ENCODE measurements at regions of chr12 and their contacts with region 1.

Region 1: GRCh38 chr12:109880016-109880931 is at the start of gene GLTP:
- DNase-seq: peak; percentile 76 to 91 (median 84)
- H3K4me3 ChIP-seq: peak within 1 kb of the TSS; percentile 68
- H3K27ac ChIP-seq: peak within 1 kb of the TSS in 1 of 2 donors; percentile 63
- H3K4me1 ChIP-seq: peaks cover 4% of the 10 kb centered on the region
- H3K27me3 ChIP-seq: no peaks in the 10 kb centered on the region
- CTCF ChIP-seq: peak in 2 of 3 donors; percentile 91 to 94
- EP300 ChIP-seq: no peak
- POLR2A ChIP-seq: peak; percentile 60
- total RNA-seq, gene GLTP: 15.5 to 36.7 (median 26.3) TPM

Region 2: DNA sequence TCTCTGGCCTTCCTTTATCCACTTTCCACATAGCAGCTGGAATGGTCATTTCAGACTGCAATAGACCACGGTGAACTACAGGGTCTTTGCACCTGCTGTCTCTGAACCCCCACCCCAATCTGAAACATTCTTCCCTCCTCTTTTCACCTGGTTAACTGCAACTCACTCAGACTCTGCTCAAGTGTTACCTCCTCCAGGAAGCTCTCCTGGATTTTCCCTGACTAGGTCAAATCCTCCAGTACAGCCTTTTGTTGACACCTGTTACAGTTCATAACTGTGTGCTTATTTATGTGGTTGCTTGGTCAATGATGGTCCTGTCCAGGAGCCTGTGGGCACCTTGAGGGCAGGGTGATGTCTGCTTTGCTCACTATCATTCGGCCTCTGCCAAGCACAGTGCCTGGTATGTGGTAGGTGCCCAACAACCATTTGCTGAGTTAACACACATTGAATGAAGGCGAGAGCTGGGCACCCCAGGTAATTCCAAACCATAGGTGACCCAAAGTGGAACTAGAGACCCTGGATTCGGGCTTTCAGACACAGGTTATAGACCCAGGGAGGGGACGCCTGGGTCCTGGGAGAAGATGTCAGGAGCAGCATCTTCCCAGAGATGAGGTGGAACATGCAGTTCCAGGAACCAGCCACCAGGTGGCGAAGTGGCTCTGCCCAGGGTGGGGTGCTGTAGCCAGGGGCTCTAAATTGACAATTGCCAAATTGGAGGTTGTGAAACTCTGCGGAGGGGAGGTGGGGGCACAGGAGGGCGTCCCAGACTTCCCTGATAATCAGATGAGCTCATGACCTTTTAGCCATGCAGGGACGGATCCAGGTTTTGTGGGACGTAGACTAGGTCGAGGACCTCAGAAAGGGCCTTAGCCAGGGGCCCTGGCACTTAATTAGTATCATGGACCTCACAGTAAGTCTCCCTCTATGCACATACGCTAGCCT is 75.2 kb before region 1 on chr12:
- intact Hi-C with region 1: loop called in 1 of 4 experiments (anchors 5 kb)
- DNase-seq: peak; percentile 38 to 76 (median 70)
- H3K4me3 ChIP-seq: no peak overlapping the region
- H3K27ac ChIP-seq: no peak overlapping the region
- H3K4me1 ChIP-seq: no peaks in the 10 kb centered on the region
- H3K27me3 ChIP-seq: no peaks in the 10 kb centered on the region
- CTCF ChIP-seq: peak; percentile 61 to 72 (median 68)
- EP300 ChIP-seq: no peak
- POLR2A ChIP-seq: no peak

Region 3: DNA sequence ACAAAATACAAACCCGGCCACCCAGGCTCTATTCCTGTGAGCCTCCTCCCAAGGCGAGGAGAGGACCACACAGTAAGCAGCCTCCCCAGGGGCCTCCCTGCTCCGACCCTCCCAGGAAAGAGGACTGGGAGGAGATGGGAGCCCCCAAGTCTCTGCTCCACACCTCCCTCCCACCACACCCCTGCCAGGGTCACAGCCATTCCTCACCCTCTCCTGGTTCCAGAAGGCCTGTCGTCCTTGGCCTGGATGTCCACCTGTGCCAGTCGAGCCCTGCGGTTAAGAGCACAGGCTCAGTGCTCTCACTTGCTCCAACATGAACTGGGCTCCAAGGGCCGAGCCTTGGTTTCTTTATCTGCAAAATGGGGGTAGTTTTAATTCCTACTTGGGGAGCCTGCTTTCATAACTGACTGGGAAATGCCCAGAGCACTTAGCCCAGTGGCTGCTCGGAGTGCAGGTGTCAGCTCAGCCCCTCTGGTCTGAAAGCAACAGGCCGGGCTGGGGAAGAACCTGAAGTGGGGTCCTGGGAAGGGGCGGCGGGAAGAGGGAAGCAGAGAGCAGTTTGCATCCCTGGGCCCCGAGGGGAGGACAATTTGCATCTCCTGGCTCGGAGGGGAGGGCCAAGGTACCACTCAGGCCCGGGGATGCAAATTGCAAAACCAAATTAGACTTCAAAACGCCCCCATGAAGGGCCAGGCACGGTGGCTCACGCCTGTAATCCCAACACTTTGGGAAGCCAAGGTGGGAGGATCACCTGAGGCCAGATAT is 43.4 kb after region 1 on chr12:
- intact Hi-C with region 1: loop called in 1 of 4 experiments (anchors 1 kb)
- DNase-seq: no peak
- H3K4me3 ChIP-seq: no peak overlapping the region
- H3K27ac ChIP-seq: no peak overlapping the region
- H3K4me1 ChIP-seq: no peaks in the 10 kb centered on the region
- H3K27me3 ChIP-seq: no peaks in the 10 kb centered on the region
- CTCF ChIP-seq: no peak
- EP300 ChIP-seq: no peak
- POLR2A ChIP-seq: no peak

Region 4: DNA sequence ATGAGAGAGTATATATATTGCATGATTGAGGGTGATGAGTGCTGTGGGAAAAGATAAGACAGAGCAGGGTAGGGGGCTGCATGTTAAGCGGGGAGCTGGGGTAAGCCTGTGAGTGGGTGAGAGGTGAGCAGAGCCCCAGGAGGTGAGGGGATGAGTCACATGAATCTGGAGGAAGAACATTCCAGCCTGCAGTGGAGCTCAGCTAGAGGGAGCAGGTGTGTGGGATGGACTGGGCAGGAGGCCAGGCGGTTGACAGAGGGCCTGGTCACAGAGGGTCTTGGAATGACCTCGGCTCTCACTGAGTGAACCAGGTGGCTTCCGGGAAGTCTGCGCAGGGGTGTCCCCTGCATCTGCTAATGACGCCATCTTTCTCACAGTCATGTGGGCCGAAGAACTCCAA is 71.5 kb after region 1 on chr12:
- intact Hi-C with region 1: no loop called
- DNase-seq: peak; percentile 33 to 60 (median 42)
- H3K4me3 ChIP-seq: no peak overlapping the region
- H3K27ac ChIP-seq: peak overlapping the region; percentile 28 to 47
- H3K4me1 ChIP-seq: peaks cover 19% of the 10 kb centered on the region
- H3K27me3 ChIP-seq: no peaks in the 10 kb centered on the region
- CTCF ChIP-seq: no peak
- EP300 ChIP-seq: no peak
- POLR2A ChIP-seq: no peak

Measured in ovary (tissue), 10 donors.